GM12878 (cell line): ENCODE measurements at regions of chr16 and their contacts with region 1.

Region 1: DNA sequence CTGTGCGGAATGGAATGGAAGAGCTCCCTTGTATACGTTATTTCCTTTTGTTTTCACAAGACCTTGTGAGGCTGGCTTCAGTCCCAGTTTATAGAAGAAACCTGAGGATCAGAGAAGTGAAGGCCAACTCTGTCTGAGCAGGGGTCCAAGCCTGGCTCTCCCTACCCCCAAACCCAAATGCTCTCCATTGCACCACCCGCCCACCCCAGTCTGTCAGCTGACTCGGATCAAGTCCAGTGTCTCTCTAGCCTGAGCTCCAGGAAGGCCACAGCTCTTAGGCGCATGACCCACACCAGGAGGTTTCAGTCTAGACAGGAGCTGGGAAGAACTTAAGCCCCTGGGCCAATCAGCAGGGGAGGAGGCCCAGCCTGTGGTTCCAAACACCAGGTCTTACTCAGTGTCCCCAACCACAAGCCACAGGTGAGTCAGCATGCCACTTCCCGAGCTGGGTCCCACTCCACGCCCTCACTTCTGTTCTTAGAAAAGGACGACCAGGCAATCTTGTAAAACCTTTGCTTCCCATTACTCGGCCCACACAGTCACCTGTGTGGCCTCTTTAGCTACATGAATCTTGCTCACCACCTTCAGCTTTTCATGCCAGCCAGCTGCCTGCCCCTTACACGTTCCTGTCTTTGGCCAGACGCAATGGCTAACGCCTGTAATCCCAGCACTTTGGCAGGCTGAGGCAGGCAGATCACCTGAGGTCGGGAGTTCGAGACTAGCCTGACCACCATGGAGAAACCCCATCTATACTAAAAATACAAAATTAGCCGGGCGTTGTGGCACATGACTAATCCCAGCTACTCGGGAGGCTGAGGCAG is 27.8 kb downstream of the TK2 start:
- DNase-seq: peak; percentile 86
- ATAC-seq: peak; percentile 72
- H3K4me3 ChIP-seq: no peak overlapping the region
- H3K27ac ChIP-seq: peak overlapping the region; percentile 9; the same call in 1 of the 2 replicates
- H3K4me1 ChIP-seq: peaks cover 69% of the 10 kb centered on the region
- H3K27me3 ChIP-seq: no peaks in the 10 kb centered on the region
- CTCF ChIP-seq: no peak
- EP300 ChIP-seq: peak; percentile 66 to 89
- POLR2A ChIP-seq: no peak
- RAD21 ChIP-seq: no peak

Region 2: DNA sequence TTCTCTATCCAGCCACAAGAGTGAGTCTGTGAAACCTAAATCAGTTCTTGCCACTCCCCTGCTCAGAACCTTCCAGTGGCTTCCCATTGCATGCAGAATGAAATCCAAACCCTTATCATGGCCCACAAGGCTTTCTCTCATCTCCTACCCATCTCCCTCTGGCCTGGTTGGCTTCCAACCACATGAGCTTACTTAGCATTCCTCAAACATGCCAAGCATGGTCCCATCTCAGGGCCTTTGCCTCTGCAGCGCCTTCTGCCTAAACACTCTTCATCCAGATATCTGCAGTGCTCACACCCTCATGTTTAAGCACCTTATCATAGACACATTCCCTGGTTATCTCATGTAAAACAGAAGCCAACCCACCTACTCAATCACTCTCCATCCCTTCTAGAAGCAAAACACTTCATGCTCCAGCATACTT is 12.2 kb after region 1 on chr16:
- CTCF ChIA-PET with region 1: interaction called, 11 read pairs
- POLR2A ChIA-PET with region 1: interaction called, 10 read pairs
- RAD21 ChIA-PET with region 1: interaction called, 5 read pairs
- SMC1A ChIA-PET with region 1: interaction called, 19 read pairs
- in situ Hi-C with region 1: no loop called
- intact Hi-C with region 1: loop called (anchors 2 kb)
- DNase-seq: no peak
- ATAC-seq: no peak
- H3K4me3 ChIP-seq: no peak overlapping the region
- H3K27ac ChIP-seq: no peak overlapping the region
- H3K4me1 ChIP-seq: peaks cover 6% of the 10 kb centered on the region
- H3K27me3 ChIP-seq: peaks cover 0 to 3% of the 10 kb centered on the region in 2 experiments; a peak in 2 of 4 replicates
- CTCF ChIP-seq: no peak
- EP300 ChIP-seq: no peak
- POLR2A ChIP-seq: no peak
- RAD21 ChIP-seq: no peak

Region 3: GRCh38 chr16:66547101-66547989 is 25.2 kb after region 1 on chr16:
- CTCF ChIA-PET with region 1: interaction called, 35 read pairs
- POLR2A ChIA-PET with region 1: interaction called, 21 read pairs
- RAD21 ChIA-PET with region 1: interaction called, 15 read pairs
- SMC1A ChIA-PET with region 1: interaction called, 86 read pairs
- in situ Hi-C with region 1: no loop called
- intact Hi-C with region 1: loop called (anchors 1 kb)
- DNase-seq: no peak
- ATAC-seq: no peak
- H3K4me3 ChIP-seq: no peak overlapping the region
- H3K27ac ChIP-seq: no peak overlapping the region
- H3K4me1 ChIP-seq: peaks cover 18% of the 10 kb centered on the region
- H3K27me3 ChIP-seq: no peaks in the 10 kb centered on the region
- CTCF ChIP-seq: no peak
- EP300 ChIP-seq: no peak
- POLR2A ChIP-seq: no peak
- RAD21 ChIP-seq: no peak